ENCODE measurements at regions of chr12 and their contacts with region 1.

Region 1: GRCh38 chr12:106223485-106224354 is 24.1 kb downstream of the CKAP4 start:
- DNase-seq: no peak
- H3K4me3 ChIP-seq: no peak overlapping the region
- H3K27ac ChIP-seq: peak overlapping the region; percentile 11
- H3K27me3 ChIP-seq: peaks cover 3% of the 10 kb centered on the region
- CTCF ChIP-seq: peak; percentile 96

Region 2: GRCh38 chr12:105705765-105706164 is 518.0 kb before region 1 on chr12:
- CTCF ChIA-PET with region 1: interaction called, 14 read pairs
- POLR2A ChIA-PET with region 1: no interaction called
- DNase-seq: peak; percentile 37
- H3K4me3 ChIP-seq: no peak overlapping the region
- H3K27ac ChIP-seq: no peak overlapping the region
- H3K27me3 ChIP-seq: no peaks in the 10 kb centered on the region
- CTCF ChIP-seq: peak; percentile 84

Region 3: GRCh38 chr12:106170285-106170684 is 53.4 kb before region 1 on chr12:
- CTCF ChIA-PET with region 1: interaction called, 12 read pairs
- POLR2A ChIA-PET with region 1: no interaction called
- DNase-seq: no peak
- H3K4me3 ChIP-seq: no peak overlapping the region
- H3K27ac ChIP-seq: no peak overlapping the region
- H3K27me3 ChIP-seq: no peaks in the 10 kb centered on the region
- CTCF ChIP-seq: no peak

Region 4: GRCh38 chr12:106234449-106234848 is 10.7 kb after region 1 on chr12:
- CTCF ChIA-PET with region 1: interaction called, 11 read pairs
- POLR2A ChIA-PET with region 1: no interaction called
- DNase-seq: no peak
- H3K4me3 ChIP-seq: no peak overlapping the region
- H3K27ac ChIP-seq: no peak overlapping the region
- H3K27me3 ChIP-seq: no peaks in the 10 kb centered on the region
- CTCF ChIP-seq: no peak

Region 5: GRCh38 chr12:106345739-106346138 is 122.0 kb after region 1 on chr12:
- CTCF ChIA-PET with region 1: interaction called, 17 read pairs
- POLR2A ChIA-PET with region 1: no interaction called
- DNase-seq: no peak
- H3K4me3 ChIP-seq: no peak overlapping the region
- H3K27ac ChIP-seq: no peak overlapping the region
- H3K27me3 ChIP-seq: no peaks in the 10 kb centered on the region
- CTCF ChIP-seq: peak; percentile 42

Region 6: GRCh38 chr12:106369607-106370346 is 146.1 kb after region 1 on chr12:
- CTCF ChIA-PET with region 1: interaction called, 12 read pairs
- POLR2A ChIA-PET with region 1: no interaction called
- DNase-seq: peak; percentile 55
- H3K4me3 ChIP-seq: no peak overlapping the region
- H3K27ac ChIP-seq: peak overlapping the region; percentile 41
- H3K27me3 ChIP-seq: no peaks in the 10 kb centered on the region
- CTCF ChIP-seq: no peak

Region 7: GRCh38 chr12:106573239-106573638 is 349.5 kb after region 1 on chr12:
- CTCF ChIA-PET with region 1: no interaction called
- POLR2A ChIA-PET with region 1: no interaction called
- DNase-seq: no peak
- H3K4me3 ChIP-seq: no peak overlapping the region
- H3K27ac ChIP-seq: no peak overlapping the region
- H3K27me3 ChIP-seq: peaks cover 13% of the 10 kb centered on the region
- CTCF ChIP-seq: no peak

Region 8: DNA sequence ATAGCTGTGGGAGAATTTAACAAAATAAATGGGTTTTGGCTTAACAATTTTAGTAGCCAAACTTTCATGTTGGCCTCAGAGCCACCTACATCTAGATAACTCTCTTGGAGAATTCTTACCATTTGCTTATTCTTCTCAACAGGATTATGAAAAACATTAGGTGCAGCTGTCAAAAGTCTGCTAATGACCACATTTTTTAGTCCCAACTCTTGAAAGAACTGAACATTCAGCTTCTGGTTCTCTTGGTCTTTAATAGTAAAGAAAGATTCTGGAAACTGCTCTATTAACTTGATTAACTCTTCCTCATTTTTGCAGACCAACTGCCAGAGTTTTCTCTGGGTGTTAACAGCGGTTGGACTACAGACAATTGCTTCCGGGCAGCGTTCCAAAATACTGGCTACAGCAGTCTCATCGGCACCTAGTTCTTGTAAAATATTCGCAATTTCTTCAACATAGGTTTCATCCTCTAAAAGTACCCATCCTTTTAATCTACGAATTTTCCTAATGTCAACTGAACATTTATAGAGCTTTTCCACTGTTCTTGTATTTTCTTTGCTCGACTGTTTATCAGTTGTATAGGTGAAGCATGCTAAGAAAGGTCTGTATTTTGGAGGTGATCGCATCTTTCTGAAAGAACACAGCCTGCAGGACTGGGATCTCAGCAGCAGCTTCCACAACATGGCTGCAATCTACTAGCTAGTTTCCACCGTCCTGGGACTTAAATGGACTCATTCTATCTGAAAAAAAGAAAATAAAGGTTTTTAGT is 754.5 kb after region 1 on chr12:
- CTCF ChIA-PET with region 1: no interaction called
- POLR2A ChIA-PET with region 1: no interaction called
- DNase-seq: no peak
- H3K4me3 ChIP-seq: no peak overlapping the region
- H3K27ac ChIP-seq: no peak overlapping the region
- H3K27me3 ChIP-seq: no peaks in the 10 kb centered on the region
- CTCF ChIP-seq: no peak

Measured in AG04450 (cell line).